Ovary (tissue), 10 donors: ENCODE measurements at regions of chr21 and their contacts with region 1.

Region 1: GRCh38 chr21:25881525-25882376 is 147.0 kb downstream of the GABPA start:
- DNase-seq: peak; percentile 39 to 81 (median 67)
- H3K4me3 ChIP-seq: no peak overlapping the region
- H3K27ac ChIP-seq: no peak overlapping the region
- H3K4me1 ChIP-seq: peaks cover 1% of the 10 kb centered on the region
- H3K27me3 ChIP-seq: no peaks in the 10 kb centered on the region
- CTCF ChIP-seq: peak; percentile 59 to 71 (median 61)
- EP300 ChIP-seq: no peak
- POLR2A ChIP-seq: no peak

Region 2: DNA sequence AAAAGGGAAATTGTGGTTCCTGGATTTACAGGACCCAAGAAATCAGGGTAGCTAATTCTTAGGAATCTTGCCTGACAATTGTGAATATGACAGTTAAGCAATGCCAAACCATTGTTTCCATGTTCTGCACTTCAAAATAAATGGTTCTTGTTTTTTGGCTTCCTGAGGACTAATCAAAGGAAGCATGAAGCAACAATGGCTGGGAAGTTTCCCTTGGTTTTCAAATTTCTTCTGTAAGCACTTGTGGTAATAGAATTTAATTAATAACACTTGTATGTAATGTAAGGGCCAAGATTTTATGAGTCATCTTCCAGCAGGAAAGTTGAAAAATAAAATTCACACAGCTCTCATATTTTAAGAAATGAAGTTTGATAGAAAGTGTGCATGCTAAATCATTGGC is 211.0 kb before region 1 on chr21:
- intact Hi-C with region 1: no loop called
- DNase-seq: no peak
- H3K4me3 ChIP-seq: no peak overlapping the region
- H3K27ac ChIP-seq: no peak overlapping the region
- H3K4me1 ChIP-seq: peaks cover 2% of the 10 kb centered on the region
- H3K27me3 ChIP-seq: no peaks in the 10 kb centered on the region
- CTCF ChIP-seq: no peak
- EP300 ChIP-seq: no peak
- POLR2A ChIP-seq: no peak

Region 3: GRCh38 chr21:25997788-25998611 is 116.2 kb after region 1 on chr21:
- intact Hi-C with region 1: no loop called
- DNase-seq: no peak
- H3K4me3 ChIP-seq: no peak overlapping the region
- H3K27ac ChIP-seq: no peak overlapping the region
- H3K4me1 ChIP-seq: no peaks in the 10 kb centered on the region
- H3K27me3 ChIP-seq: no peaks in the 10 kb centered on the region
- CTCF ChIP-seq: no peak
- EP300 ChIP-seq: no peak
- POLR2A ChIP-seq: no peak

Region 4: DNA sequence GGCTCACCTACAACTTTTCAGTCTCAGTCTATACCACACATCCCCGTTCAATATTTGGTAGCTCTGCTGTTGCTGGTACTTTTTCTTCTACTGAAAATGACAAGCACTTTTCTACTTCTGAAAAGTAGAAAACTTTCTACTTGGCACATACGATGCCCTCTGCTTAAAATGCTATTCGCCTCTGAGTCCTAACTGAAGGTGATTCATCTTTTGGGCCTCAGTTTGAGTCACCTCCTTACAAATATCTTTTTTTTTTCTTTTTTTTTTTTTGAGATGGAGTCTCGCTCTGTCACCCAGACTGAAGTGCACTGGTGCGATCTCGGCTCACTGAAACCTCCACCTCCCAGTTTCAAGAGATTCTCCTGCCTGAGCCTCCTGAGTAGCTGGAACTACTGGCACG is 827.3 kb after region 1 on chr21:
- intact Hi-C with region 1: loop called in 1 of 4 experiments (anchors 10 kb)
- DNase-seq: no peak
- H3K4me3 ChIP-seq: no peak overlapping the region
- H3K27ac ChIP-seq: no peak overlapping the region
- H3K4me1 ChIP-seq: no peaks in the 10 kb centered on the region
- H3K27me3 ChIP-seq: no peaks in the 10 kb centered on the region
- CTCF ChIP-seq: no peak
- EP300 ChIP-seq: no peak
- POLR2A ChIP-seq: no peak

Region 5: DNA sequence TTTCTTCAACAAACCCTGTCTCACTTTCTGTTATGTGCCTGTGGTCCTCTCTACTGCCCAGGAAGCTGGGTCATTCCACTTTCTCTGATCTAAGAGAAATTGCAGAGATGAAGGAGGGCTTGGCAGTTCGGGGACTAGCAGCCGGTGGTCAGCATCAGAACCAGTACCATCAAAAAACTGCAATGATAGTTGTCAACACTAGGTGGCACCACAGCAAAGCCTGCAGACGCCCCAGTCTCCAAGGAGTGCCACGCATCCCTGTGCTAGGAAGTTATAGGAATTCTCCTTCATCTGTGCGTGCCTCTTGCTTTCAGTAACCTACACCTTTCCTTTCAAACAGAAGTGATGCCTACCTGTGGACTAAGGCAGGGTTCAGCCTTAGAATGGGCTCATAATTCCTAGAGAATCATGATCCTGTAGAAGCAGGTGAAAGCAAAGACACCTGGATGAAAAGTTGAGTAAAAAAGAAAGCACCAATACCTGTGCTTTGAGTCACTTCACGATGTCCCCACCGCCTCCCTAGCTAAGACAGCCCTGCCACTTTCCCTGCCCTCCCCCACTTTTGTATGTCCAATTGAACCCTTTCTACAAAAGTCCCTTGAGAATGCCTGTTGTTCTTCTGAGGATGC is 834.2 kb after region 1 on chr21:
- intact Hi-C with region 1: loop called in 1 of 4 experiments (anchors 5 kb)
- DNase-seq: peak in 1 of 5 donors; percentile 32
- H3K4me3 ChIP-seq: no peak overlapping the region
- H3K27ac ChIP-seq: no peak overlapping the region
- H3K4me1 ChIP-seq: no peaks in the 10 kb centered on the region
- H3K27me3 ChIP-seq: no peaks in the 10 kb centered on the region
- CTCF ChIP-seq: peak in 1 of 3 donors; percentile 34
- EP300 ChIP-seq: no peak
- POLR2A ChIP-seq: no peak